RWPE1 (cell line): ENCODE measurements at regions of chr17 and their contacts with region 1.

Region 1: DNA sequence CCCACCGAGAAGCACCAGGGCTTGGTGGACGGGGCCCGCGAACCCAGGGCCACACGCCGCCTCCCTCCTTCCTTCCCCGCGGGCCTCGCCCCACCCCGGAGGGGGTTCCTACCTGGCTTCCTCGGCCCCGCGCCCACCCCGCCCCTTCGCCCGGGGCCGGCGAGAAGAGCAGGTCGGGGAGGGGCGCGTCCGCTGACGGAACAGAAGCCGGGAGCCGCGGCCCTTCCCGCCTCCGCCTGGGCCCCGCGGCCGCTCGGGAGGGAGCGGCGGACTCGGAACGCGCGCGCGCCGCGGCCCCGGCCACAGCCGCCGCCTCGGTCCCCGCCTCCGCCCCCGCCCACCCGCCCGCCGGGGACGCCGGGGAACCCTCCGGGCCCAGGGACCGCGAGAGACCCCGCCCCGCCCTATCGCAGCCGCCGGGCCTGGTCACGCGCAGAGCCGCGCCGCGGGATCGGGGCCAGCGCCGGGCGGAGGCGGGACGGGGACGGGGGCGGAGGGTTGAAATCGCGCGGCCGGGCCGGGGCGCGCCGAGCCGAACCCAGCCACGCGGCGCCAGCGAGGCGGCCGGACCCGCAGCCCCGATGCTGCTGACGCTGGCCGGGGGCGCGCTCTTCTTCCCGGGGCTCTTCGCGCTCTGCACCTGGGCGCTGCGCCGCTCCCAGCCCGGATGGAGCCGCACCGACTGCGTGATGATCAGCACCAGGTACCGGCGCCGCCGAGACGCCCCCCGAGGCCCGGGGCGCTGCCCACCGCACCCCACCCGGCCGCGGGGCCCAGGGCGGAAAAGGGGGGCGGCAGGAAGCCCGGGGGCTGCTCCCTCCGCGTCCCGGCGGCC is at the start of gene TLCD3A:
- DNase-seq: peak; percentile 73
- H3K27ac ChIP-seq: peak within 1 kb of the TSS; percentile 94
- CTCF ChIP-seq: no peak

Region 2: GRCh38 chr17:559551-560431 is 172.5 kb before region 1 on chr17:
- CTCF ChIA-PET with region 1: no interaction called
- POLR2A ChIA-PET with region 1: no interaction called
- DNase-seq: peak; percentile 62
- H3K27ac ChIP-seq: no peak overlapping the region
- CTCF ChIP-seq: no peak

Region 3: GRCh38 chr17:705863-706262 is 26.4 kb before region 1 on chr17:
- CTCF ChIA-PET with region 1: interaction called, 3 read pairs
- POLR2A ChIA-PET with region 1: interaction called, 13 read pairs
- DNase-seq: no peak
- H3K27ac ChIP-seq: no peak overlapping the region
- CTCF ChIP-seq: no peak

Region 4: DNA sequence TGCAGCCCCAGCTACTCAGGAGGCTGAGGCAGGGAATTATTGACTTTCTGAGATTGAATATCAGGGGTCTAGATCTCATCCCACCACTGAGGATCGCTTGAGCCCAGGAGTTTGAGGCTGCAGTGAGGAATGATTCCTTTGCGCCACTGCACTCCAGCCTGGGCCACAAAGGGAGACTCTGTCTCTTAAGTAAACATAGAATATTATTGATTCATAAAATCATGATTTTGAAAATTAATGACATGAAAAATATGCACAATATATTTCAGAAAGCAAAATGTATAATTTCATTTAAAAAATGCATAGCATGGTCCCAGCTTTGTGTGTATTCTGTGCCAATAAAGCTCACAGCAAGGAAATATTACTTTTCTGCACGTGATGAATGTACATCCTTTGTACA is 16.0 kb before region 1 on chr17:
- CTCF ChIA-PET with region 1: interaction called, 5 read pairs
- POLR2A ChIA-PET with region 1: interaction called, 13 read pairs
- DNase-seq: no peak
- H3K27ac ChIP-seq: peak overlapping the region; percentile 80
- CTCF ChIP-seq: no peak

Region 5: GRCh38 chr17:773467-774312 is 41.4 kb after region 1 on chr17:
- CTCF ChIA-PET with region 1: no interaction called
- POLR2A ChIA-PET with region 1: no interaction called
- DNase-seq: no peak
- H3K27ac ChIP-seq: 0 out of 2 replicates have a peak overlapping the region, but pooled peaks have one; percentile 15
- CTCF ChIP-seq: no peak